ENCODE measurements at regions of chr16 and their contacts with region 1.

Region 1: DNA sequence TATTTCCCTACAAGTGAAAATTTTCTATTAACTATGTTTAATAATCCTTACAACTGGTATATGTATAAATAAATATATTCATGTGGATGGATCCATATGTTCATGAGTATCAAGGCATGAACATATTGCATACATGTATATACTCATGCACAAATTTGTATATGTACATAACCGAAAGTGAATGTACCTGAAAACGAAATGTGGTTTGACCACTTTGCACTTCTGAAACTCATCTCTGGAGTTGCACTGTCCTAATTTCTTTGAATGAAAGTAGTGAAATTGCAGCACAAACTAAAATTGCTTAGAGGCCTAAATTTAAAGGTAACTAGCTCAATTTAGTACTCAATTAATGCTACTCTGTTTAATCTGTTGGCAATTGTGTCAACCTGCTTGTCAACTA is 27.4 kb upstream of the GNAO1 start:
- DNase-seq: no peak
- H3K4me3 ChIP-seq: no peak overlapping the region
- H3K27me3 ChIP-seq: no peaks in the 10 kb centered on the region
- CTCF ChIP-seq: no peak

Region 2: GRCh38 chr16:56183266-56183665 is 19.3 kb after region 1 on chr16:
- CTCF ChIA-PET with region 1: no interaction called
- POLR2A ChIA-PET with region 1: interaction called, 16 read pairs
- DNase-seq: no peak
- H3K4me3 ChIP-seq: no peak overlapping the region
- H3K27me3 ChIP-seq: no peaks in the 10 kb centered on the region
- CTCF ChIP-seq: no peak